ENCODE measurements at regions of chr4 and their contacts with region 1.

Region 1: DNA sequence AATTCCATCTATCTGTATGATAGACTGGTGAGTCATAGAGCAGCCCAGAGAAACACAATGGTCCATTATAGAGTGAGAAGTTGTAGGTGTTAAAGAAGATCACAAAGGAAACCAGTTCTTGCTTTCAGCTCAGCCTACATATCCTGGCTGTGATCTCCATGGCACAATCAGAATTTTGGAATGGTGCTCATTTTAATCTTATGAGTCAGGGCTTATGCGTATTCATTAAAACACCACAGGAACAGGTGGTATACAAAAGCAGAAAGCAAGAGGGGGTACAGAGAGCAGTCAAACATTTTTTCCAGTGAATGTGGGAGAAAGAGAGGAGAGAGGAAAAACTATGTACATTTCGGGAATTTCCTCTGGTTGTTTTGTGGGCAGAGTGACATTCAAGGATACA is 126.9 kb downstream of the MFAP3L start:
- DNase-seq: peak; percentile 20 to 57
- H3K4me3 ChIP-seq: no peak overlapping the region
- H3K27ac ChIP-seq: no peak overlapping the region
- H3K4me1 ChIP-seq: no peaks in the 10 kb centered on the region; the same call in 1 of the 2 replicates
- H3K27me3 ChIP-seq: no peaks in the 10 kb centered on the region
- CTCF ChIP-seq: no peak

Region 2: GRCh38 chr4:169573889-169574288 is 325.4 kb before region 1 on chr4:
- CTCF ChIA-PET with region 1: no interaction called
- POLR2A ChIA-PET with region 1: no interaction called
- intact Hi-C with region 1: no loop called
- DNase-seq: no peak
- H3K4me3 ChIP-seq: no peak overlapping the region
- H3K27ac ChIP-seq: no peak overlapping the region
- H3K4me1 ChIP-seq: no peaks in the 10 kb centered on the region
- H3K27me3 ChIP-seq: no peaks in the 10 kb centered on the region
- CTCF ChIP-seq: no peak

Region 3: GRCh38 chr4:170027181-170027829 is 128.0 kb after region 1 on chr4:
- CTCF ChIA-PET with region 1: no interaction called
- POLR2A ChIA-PET with region 1: no interaction called
- intact Hi-C with region 1: loop called (anchors 2 kb)
- DNase-seq: peak; percentile 63 to 92
- H3K4me3 ChIP-seq: peak overlapping the region; percentile 75; the same call in 1 of the 2 replicates
- H3K27ac ChIP-seq: peak overlapping the region; percentile 50; the same call in 1 of the 2 replicates
- H3K4me1 ChIP-seq: no peaks in the 10 kb centered on the region
- H3K27me3 ChIP-seq: no peaks in the 10 kb centered on the region
- CTCF ChIP-seq: no peak

Measured in PC-9 (cell line).